Activated naive CD4-positive, alpha-beta T cell treated with anti-CD3 and anti-CD28 coated beads, Interleukin-2, amount 10 ng/mL, durations not matched to agents 7 days and 5 days (primary cell): ENCODE measurements at regions of chr20 and their contacts with region 1.

Region 1: GRCh38 chr20:50460460-50461267 is 49.5 kb upstream of the PTPN1 start:
- DNase-seq: peak; percentile 88
- H3K4me3 Mint-ChIP-seq: no peak overlapping the region
- H3K27ac Mint-ChIP-seq: no peak overlapping the region
- H3K4me1 Mint-ChIP-seq: peaks cover 22% of the 10 kb centered on the region
- H3K27me3 Mint-ChIP-seq: peaks cover 42% of the 10 kb centered on the region

Region 2: DNA sequence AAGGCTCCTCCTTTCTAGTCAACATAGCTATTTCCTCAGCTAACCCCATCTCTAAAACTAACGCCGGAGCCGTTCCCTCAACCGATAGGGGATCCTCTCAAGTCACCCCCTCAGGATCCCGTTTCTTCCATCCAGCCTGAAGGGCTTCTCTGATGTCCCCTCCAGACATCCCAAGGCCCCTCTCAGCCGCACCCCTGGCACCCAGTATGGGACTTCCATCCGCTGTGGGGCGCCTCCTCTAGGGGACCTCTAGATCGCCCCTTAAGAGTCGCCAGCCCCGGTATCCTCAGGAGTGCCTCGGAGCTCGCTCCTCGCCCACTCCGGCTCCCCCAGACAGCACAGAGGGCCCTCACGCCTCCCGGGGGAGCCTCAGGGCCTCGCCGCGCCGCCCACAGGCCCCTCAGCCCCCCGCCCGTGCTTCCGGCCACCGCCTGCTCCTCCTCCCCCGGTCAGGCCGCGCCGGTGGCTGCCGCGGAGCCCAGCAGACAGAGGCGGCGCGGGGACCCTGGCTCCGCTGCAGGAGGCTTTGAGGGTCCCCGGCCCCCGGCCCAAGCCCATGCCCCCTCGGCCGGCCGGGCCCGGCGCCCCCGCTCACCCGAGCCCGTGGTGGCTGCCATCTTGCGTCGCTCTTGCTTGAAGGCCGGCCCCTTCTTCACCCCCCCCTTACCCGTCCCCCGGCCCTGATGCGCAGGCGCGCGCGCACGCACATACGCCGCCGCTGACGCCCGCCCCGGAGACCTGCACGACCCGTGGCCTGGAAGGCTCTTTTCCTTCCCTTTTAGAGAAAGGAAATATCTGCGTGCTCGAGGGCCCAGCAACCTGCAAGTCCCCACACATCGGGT is 347.9 kb before region 1 on chr20 and contains the start of gene UBE2V1:
- CTCF ChIA-PET with region 1: no interaction called
- DNase-seq: peak; percentile 91
- H3K4me3 Mint-ChIP-seq: peak within 1 kb of the TSS; percentile 89
- H3K27ac Mint-ChIP-seq: peak within 1 kb of the TSS; percentile 96
- H3K4me1 Mint-ChIP-seq: peaks cover 81% of the 10 kb centered on the region
- H3K27me3 Mint-ChIP-seq: no peaks in the 10 kb centered on the region

Region 3: DNA sequence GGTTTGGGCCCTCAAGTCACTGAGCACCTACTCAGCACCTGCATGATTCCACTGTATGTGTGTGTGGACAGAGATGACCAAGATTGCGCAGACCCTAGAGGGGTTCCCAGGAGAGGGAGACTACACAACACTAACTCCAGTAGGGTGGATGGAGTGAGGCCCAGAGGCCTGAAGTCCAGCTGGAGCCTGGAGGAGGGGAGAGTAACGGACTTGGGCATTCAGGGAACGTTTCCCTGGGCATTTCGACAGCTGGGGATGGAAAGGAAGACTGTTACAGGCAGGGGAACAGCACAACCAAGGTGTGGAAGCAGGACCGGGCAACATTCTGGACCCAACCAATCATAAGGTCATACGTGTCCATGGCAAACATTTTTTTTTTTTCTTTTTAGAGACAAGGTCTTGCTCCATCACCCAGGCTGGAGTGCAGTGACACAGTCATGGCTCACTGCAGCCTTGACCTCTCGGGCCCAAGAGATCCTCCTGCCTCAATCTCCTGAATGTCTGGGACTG is 281.1 kb before region 1 on chr20:
- CTCF ChIA-PET with region 1: interaction called, 23 read pairs
- DNase-seq: no peak
- H3K4me3 Mint-ChIP-seq: no peak overlapping the region
- H3K27ac Mint-ChIP-seq: no peak overlapping the region
- H3K4me1 Mint-ChIP-seq: no peaks in the 10 kb centered on the region
- H3K27me3 Mint-ChIP-seq: peaks cover 17% of the 10 kb centered on the region

Region 4: DNA sequence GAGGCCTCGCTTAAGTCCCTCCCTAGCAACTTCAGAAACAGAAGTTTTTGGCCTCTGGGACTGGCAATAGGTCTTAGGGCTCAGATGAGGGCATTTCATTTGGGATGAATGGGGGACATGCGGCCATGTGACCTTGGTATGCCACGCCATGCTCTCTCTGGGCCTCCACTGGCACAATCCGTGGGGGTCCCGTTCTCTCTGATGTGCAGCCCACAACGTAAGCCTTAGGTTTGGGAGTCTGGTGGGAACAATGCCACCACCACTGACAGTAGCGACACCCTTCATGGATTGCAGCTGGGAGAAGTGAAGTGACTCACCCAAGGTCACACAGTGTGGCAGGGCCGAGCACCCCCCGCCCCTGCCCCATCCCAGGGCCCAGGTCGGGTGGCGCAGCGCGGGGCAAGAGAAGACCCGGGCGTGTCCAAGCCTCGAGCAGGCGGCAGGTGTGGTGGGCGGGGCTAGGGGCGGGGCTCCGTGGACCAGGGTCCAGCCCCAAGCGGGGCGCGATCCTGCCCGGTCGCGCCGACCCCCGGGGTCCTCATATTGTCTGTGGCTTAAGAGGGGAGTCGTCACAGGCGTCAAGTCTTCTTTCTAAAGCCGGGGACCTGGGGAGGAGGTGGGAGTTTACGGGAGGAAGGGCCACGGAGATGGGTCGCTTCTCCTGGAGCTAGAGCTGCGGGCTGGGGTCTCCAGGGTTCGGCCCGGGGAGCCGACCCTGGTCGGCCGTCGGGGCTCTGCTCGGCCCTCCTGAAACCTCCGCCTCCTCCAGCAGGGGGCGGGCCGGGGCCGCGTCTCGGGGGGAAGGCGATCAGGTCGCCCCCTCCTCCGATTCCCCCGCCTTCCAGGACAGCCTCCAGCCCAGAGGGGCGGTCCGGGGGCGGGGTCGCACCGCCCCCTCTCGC is 270.7 kb before region 1 on chr20:
- CTCF ChIA-PET with region 1: interaction called, 99 read pairs
- DNase-seq: peak; percentile 91
- H3K4me3 Mint-ChIP-seq: peak overlapping the region; percentile 57
- H3K27ac Mint-ChIP-seq: peak overlapping the region; percentile 19
- H3K4me1 Mint-ChIP-seq: peaks cover 21% of the 10 kb centered on the region
- H3K27me3 Mint-ChIP-seq: peaks cover 14% of the 10 kb centered on the region

Region 5: GRCh38 chr20:50588034-50588611 is 127.5 kb after region 1 on chr20:
- CTCF ChIA-PET with region 1: interaction called, 12 read pairs
- DNase-seq: peak; percentile 79
- H3K4me3 Mint-ChIP-seq: no peak overlapping the region
- H3K27ac Mint-ChIP-seq: peak overlapping the region; percentile 70
- H3K4me1 Mint-ChIP-seq: no peaks in the 10 kb centered on the region
- H3K27me3 Mint-ChIP-seq: no peaks in the 10 kb centered on the region